Posterior vena cava (tissue), 2 donors: ENCODE measurements at regions of chr17 and their contacts with region 1.

Region 1: GRCh38 chr17:71849783-71850768 is 270.7 kb upstream of the SOX9 start:
- DNase-seq: no peak

Region 2: DNA sequence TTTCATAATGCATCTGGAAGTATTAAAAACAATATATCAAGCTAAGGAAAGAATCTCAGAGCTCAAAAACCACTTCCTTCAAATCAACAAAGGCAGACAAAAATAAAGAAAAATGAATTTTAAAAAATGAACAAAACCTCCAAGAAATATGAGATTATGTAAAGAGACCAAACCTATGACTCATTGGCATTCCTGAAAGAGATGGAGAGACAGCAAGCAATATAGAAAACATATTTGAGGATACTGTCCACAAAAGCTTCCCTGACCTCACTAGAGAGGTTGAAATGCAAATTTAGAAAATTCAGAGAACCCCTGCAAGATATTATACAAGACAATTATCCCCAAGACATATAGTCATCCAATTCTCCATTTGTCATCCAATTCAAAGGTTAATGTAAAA is 40.5 kb before region 1 on chr17:
- intact Hi-C with region 1: loop called in 1 of 2 experiments (anchors 1 kb)
- DNase-seq: no peak

Region 3: DNA sequence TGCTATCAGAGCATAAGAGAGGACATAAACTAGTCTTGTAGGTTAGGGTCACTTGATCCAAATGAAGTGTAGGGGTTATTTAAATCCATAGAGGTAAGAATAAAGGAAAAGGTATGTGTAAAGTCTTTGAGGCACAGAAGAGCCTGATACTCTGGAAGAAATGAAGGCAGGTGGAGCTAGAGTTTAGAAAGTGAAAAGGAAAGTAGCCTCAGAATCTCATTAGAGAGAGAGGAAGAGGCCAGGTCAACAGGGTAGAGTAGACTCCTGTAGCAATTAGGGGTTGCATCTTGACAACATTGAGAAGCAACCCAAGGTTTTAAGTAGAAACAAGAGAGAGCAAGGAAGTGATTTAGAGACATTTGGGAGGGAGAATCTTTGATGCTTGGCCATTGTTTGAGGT is 35.6 kb after region 1 on chr17:
- intact Hi-C with region 1: no loop called
- DNase-seq: no peak

Region 4: DNA sequence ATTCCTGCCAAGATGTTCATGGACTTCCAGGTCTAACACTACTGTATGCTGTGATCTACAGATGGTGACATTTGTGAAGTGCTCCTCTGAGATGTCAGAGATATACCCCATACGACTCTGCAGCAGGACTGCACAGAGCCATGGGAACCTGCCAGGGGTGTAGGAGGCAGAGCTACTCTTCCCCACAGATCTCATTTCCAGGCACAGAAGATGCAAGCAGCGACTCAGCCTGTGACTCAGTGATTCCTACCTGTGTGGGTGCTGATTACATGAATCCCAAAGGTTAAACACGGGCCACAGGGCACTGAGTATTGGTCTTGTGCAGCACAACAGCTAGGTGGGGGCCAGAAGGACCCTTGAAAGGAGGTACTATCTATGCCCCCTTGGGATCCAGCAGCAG is 133.8 kb after region 1 on chr17:
- intact Hi-C with region 1: loop called in 1 of 2 experiments (anchors 5 kb)
- DNase-seq: no peak